A673 (cell line): ENCODE measurements at regions of chr2 and their contacts with region 1.

Region 1: GRCh38 chr2:165401285-165401852 is 68.1 kb upstream of the CSRNP3 start:
- DNase-seq: peak; percentile 91
- H3K4me3 ChIP-seq: no peak overlapping the region
- H3K27ac ChIP-seq: peak overlapping the region; percentile 61
- H3K4me1 ChIP-seq: peaks cover 55% of the 10 kb centered on the region
- H3K27me3 ChIP-seq: no peaks in the 10 kb centered on the region
- CTCF ChIP-seq: peak; percentile 83

Region 2: DNA sequence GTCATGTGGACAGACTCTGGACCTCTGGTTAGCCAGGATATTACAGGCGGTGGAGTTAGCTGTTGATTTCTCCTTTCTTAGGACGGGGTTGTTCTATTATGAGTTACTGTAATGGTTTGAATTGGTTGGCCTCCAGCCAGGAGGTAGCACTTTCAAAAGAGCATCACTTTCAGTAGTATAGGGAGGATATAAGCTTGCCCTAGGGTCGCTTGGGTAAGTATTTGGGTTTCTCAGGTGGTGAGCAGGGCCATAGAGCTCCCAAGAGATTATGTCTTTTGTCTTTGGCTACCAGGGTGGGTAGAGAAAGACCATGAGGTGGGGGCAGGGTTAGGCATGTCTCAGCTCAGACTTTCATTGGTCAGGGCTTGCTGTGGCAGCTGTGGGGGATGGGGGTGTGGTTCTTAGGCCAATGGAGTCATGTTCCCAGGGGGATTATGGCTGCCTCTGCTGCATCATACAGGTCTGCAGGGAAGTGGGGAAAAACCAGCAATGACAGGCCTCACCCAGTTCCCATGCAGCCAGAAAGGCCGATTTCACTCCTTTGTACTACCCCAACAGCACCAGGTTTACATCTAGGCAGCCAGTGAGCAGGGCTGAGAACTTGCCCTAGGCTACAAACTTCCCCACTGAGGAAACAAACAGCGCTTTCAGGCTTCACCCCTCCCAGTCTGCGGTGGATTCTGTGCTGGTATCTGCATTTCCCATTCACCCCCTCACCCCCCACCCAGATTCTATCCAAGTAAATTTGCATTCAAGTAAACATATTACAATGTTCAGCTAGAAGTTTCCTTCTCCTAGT is 356.7 kb before region 1 on chr2:
- CTCF ChIA-PET with region 1: no interaction called
- POLR2A ChIA-PET with region 1: no interaction called
- intact Hi-C with region 1: no loop called
- DNase-seq: no peak
- H3K4me3 ChIP-seq: no peak overlapping the region
- H3K27ac ChIP-seq: no peak overlapping the region
- H3K4me1 ChIP-seq: no peaks in the 10 kb centered on the region
- H3K27me3 ChIP-seq: no peaks in the 10 kb centered on the region
- CTCF ChIP-seq: no peak

Region 3: GRCh38 chr2:165469417-165469816 is 68.0 kb after region 1 on chr2 and contains the start of gene CSRNP3:
- CTCF ChIA-PET with region 1: interaction called, 3 read pairs
- POLR2A ChIA-PET with region 1: no interaction called
- intact Hi-C with region 1: loop called (anchors 5 kb)
- DNase-seq: peak; percentile 96
- H3K4me3 ChIP-seq: peak within 1 kb of the TSS; percentile 59
- H3K27ac ChIP-seq: peak within 1 kb of the TSS; percentile 51
- H3K4me1 ChIP-seq: peaks cover 42% of the 10 kb centered on the region
- H3K27me3 ChIP-seq: no peaks in the 10 kb centered on the region
- CTCF ChIP-seq: no peak; the same call in 1 of the 2 replicates
- total RNA-seq, gene CSRNP3: 39.5 and 47.7 TPM in 2 replicates

Region 4: DNA sequence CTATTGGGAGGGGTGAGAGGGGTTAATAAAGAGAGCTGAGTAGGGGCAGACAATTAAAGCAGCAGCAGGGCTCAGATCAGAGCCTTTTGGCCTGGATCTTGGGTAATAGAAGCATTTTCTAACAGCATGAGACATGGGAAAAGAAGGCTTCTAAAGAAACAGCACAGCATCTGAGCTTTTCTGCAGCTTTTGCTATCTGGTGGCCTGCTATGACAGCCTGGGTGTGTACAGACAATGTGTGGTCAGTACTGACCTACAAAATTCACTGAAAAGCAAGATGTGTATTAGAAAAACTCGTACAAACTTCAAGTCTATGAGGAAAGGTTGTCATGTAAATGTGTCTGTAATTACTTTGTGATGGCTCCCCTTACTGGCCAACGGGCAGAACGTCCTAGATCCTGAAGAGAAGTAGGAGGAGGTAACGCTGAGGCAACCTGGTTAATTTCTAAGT is 297.1 kb after region 1 on chr2:
- CTCF ChIA-PET with region 1: no interaction called
- POLR2A ChIA-PET with region 1: no interaction called
- intact Hi-C with region 1: loop called (anchors 1 kb)
- DNase-seq: peak; percentile 85
- H3K4me3 ChIP-seq: no peak overlapping the region
- H3K27ac ChIP-seq: peak overlapping the region; percentile 6
- H3K4me1 ChIP-seq: peaks cover 23% of the 10 kb centered on the region
- H3K27me3 ChIP-seq: no peaks in the 10 kb centered on the region
- CTCF ChIP-seq: peak; percentile 71

Region 5: DNA sequence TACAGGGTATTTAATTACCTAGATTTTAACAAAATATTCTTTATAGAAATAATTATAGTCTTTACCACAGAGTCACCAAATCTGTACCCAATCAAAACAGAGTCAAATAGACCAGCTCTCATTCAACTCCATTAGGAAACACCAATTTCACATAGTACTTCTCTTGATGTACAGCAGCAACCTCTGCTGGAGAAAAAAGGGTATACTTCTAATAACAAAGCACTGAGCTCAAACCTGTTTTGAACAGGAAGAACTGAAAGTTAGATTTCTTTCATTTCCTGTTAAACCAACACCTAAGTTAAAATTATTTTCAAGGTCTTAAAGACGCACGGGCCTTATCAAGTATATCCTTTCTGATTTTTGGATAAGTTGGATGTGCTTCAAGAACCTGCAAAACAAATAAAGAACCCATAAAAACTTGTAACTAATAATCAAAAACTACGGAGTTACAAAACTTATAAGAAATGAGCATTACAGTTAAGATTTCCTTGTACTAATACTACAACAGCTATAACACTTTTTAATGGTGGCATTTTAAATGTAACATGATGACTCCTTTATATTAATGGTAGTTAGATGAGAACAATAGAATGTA is 473.2 kb after region 1 on chr2:
- CTCF ChIA-PET with region 1: interaction called, 8 read pairs
- POLR2A ChIA-PET with region 1: no interaction called
- intact Hi-C with region 1: loop called (anchors 5 kb)
- DNase-seq: peak; percentile 85
- H3K4me3 ChIP-seq: no peak overlapping the region
- H3K27ac ChIP-seq: no peak overlapping the region
- H3K4me1 ChIP-seq: no peaks in the 10 kb centered on the region
- H3K27me3 ChIP-seq: no peaks in the 10 kb centered on the region
- CTCF ChIP-seq: peak; percentile 76